B cell (primary cell): ENCODE measurements at regions of chr14 and their contacts with region 1.

Region 1: GRCh38 chr14:54773171-54773975 is 129.3 kb downstream of the GCH1 start:
- DNase-seq: peak; percentile 66
- ATAC-seq: peak; percentile 7
- H3K4me3 ChIP-seq: no peak overlapping the region
- H3K4me3 Mint-ChIP-seq: no peak overlapping the region
- H3K27ac ChIP-seq: peak overlapping the region in 1 of 2 donors; percentile 28
- H3K27ac Mint-ChIP-seq: peak overlapping the region; percentile 47
- H3K4me1 ChIP-seq: peaks cover 42% of the 10 kb centered on the region in 2 donors
- H3K4me1 Mint-ChIP-seq: peaks cover 35% of the 10 kb centered on the region
- H3K27me3 ChIP-seq: no peaks in the 10 kb centered on the region
- H3K27me3 Mint-ChIP-seq: no peaks in the 10 kb centered on the region
- CTCF ChIP-seq: no peak

Region 2: GRCh38 chr14:54488646-54489317 is 284.6 kb before region 1 on chr14 and contains the start of gene GMFB:
- CTCF ChIA-PET with region 1: interaction called, 11 read pairs
- POLR2A ChIA-PET with region 1: no interaction called
- intact Hi-C with region 1: no loop called
- DNase-seq: peak; percentile 92
- ATAC-seq: peak; percentile 96
- H3K4me3 ChIP-seq: peak within 1 kb of the TSS; percentile 69 to 97 (median 83)
- H3K4me3 Mint-ChIP-seq: peak within 1 kb of the TSS; percentile 97
- H3K27ac ChIP-seq: peak within 1 kb of the TSS; percentile 82 to 97
- H3K27ac Mint-ChIP-seq: peak within 1 kb of the TSS; percentile 98
- H3K4me1 ChIP-seq: peaks cover 41 to 52% of the 10 kb centered on the region in 2 donors
- H3K4me1 Mint-ChIP-seq: peaks cover 57% of the 10 kb centered on the region
- H3K27me3 ChIP-seq: no peaks in the 10 kb centered on the region
- H3K27me3 Mint-ChIP-seq: no peaks in the 10 kb centered on the region
- CTCF ChIP-seq: no peak
- total RNA-seq, gene GMFB: 42.6 and 49.8 TPM in 2 replicates

Region 3: DNA sequence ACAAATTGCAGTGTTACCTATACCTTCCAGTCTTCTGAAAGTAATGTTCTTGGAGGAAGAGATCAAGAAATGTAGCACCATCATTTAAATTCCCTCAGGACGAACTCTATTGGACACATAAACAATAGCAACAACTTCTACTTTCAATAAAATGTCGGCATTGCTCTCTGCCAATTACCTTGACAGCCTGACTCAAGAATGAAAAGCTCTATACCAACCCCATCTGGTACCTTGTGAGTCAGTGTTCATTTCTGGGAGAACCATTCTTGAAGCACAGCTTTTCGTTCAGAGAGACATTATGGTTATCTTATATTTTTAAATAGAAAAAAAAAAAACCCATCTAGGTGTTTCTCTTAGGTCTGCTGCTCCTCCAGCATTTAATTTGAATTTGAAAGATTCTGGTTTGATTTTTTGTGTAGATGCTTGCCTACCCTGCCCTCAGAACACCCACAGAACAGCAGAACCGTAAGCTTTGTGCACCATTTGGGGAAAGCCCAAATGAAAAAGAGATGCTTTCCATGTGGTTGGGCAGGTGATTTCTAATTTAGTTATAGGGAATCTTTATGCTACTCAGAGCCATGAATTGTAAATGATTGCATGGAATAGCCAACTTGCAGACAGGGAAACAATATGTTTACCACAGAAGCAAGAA is 50.5 kb before region 1 on chr14:
- CTCF ChIA-PET with region 1: interaction called, 24 read pairs
- POLR2A ChIA-PET with region 1: no interaction called
- intact Hi-C with region 1: no loop called
- DNase-seq: peak; percentile 63
- ATAC-seq: peak; percentile 58
- H3K4me3 ChIP-seq: no peak overlapping the region
- H3K4me3 Mint-ChIP-seq: peak overlapping the region; percentile 6
- H3K27ac ChIP-seq: no peak overlapping the region
- H3K27ac Mint-ChIP-seq: peak overlapping the region; percentile 44
- H3K4me1 ChIP-seq: peaks cover 0 to 3% of the 10 kb centered on the region in 2 donors
- H3K4me1 Mint-ChIP-seq: peaks cover 8% of the 10 kb centered on the region
- H3K27me3 ChIP-seq: no peaks in the 10 kb centered on the region
- H3K27me3 Mint-ChIP-seq: no peaks in the 10 kb centered on the region
- CTCF ChIP-seq: peak; percentile 44

Region 4: GRCh38 chr14:54756656-54757392 is 16.5 kb before region 1 on chr14:
- CTCF ChIA-PET with region 1: interaction called, 12 read pairs
- POLR2A ChIA-PET with region 1: no interaction called
- intact Hi-C with region 1: no loop called
- DNase-seq: no peak
- ATAC-seq: no peak
- H3K4me3 ChIP-seq: no peak overlapping the region
- H3K4me3 Mint-ChIP-seq: no peak overlapping the region
- H3K27ac ChIP-seq: no peak overlapping the region
- H3K27ac Mint-ChIP-seq: no peak overlapping the region
- H3K4me1 ChIP-seq: no peaks in the 10 kb centered on the region
- H3K4me1 Mint-ChIP-seq: no peaks in the 10 kb centered on the region
- H3K27me3 ChIP-seq: no peaks in the 10 kb centered on the region
- H3K27me3 Mint-ChIP-seq: no peaks in the 10 kb centered on the region
- CTCF ChIP-seq: no peak

Region 5: DNA sequence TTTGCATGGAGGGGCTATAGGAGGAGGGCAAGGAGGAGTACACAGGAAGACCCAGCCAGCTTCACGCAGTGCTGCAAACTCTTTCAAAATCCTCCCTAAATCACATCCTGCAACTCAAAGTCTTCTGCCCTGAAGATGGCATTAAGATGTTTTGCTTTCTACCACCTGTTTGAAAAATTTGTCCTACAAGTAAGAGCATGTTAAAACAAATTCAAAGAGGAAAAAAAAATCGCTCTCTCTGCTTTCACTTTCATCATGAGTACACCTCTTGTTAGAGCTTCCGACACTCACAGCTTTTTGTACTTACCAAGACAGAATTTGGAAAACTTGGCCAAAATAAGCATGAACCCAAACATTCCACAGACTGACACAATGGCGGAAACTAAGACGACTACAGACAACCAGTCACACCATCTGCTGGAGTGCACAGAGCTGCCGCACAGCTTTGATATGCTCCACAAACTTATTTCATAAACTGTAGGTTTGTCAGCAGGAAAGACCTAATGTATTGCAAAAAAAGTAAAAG is 107.9 kb after region 1 on chr14:
- CTCF ChIA-PET with region 1: no interaction called
- POLR2A ChIA-PET with region 1: no interaction called
- intact Hi-C with region 1: loop called (anchors 10 kb)
- DNase-seq: peak; percentile 67
- ATAC-seq: peak; percentile 59
- H3K4me3 ChIP-seq: peak overlapping the region; percentile 27 to 76 (median 55)
- H3K4me3 Mint-ChIP-seq: peak overlapping the region; percentile 93
- H3K27ac ChIP-seq: peak overlapping the region; percentile 72 to 89
- H3K27ac Mint-ChIP-seq: peak overlapping the region; percentile 92
- H3K4me1 ChIP-seq: peaks cover 7 to 10% of the 10 kb centered on the region in 2 donors
- H3K4me1 Mint-ChIP-seq: peaks cover 35% of the 10 kb centered on the region
- H3K27me3 ChIP-seq: no peaks in the 10 kb centered on the region
- H3K27me3 Mint-ChIP-seq: no peaks in the 10 kb centered on the region
- CTCF ChIP-seq: no peak